Thyroid gland (tissue), 4 donors: ENCODE measurements at regions of chr1 and their contacts with region 1.

Region 1: DNA sequence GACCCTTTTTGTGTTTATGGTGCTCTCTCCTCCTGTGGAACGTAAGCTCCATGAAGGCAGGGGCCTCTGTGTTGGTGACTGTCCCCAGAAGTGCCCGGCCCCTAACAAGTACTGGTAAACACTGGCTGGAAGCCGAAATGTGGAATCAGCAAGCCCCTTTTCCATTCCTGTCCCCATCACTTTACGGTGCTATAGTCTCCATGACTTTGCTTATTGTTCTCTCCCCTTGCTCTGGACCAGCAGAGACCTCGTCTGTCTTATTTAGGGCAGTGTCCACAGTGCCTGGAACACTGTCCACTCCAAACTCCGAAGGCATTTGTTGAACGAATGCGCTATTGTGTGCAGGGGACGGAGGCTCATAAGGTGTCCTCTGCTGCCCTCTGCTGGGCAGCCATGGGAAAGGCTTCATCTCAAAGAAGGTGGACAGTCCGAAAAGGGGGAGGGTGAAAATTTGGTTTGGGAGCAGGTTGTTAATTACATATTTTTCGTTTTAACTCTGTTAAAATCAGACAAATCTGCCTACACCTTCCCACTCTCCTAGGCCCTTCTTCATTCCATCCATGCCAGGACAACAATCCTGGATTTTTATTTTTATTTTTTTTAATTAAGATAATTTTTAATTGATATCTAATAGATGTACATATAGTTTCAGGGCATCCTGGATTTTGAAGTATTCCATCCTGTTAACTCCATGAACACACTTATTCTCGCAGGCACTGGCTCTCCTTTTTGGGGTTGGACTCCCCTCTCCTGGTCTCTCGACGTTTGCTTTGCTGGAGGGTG is 115.6 kb downstream of the PGBD5 start:
- DNase-seq: peak; percentile 80 to 83
- H3K4me3 ChIP-seq: no peak overlapping the region
- H3K27ac ChIP-seq: no peak overlapping the region
- H3K4me1 ChIP-seq: peaks cover 3 to 7% of the 10 kb centered on the region in 2 donors
- H3K27me3 ChIP-seq: no peaks in the 10 kb centered on the region
- CTCF ChIP-seq: peak; percentile 77 to 93 (median 88)
- POLR2A ChIP-seq: no peak

Region 2: GRCh38 chr1:229661022-229661877 is 649.3 kb before region 1 on chr1:
- intact Hi-C with region 1: loop called (anchors 5 kb)
- DNase-seq: peak; percentile 87 to 89
- H3K4me3 ChIP-seq: no peak overlapping the region
- H3K27ac ChIP-seq: no peak overlapping the region
- H3K4me1 ChIP-seq: peaks cover 3 to 4% of the 10 kb centered on the region in 2 donors
- H3K27me3 ChIP-seq: no peaks in the 10 kb centered on the region
- CTCF ChIP-seq: peak; percentile 74 to 95 (median 93)
- POLR2A ChIP-seq: no peak